Mammary epithelial cell (primary cell): ENCODE measurements at regions of chr7 and their contacts with region 1.

Region 1: GRCh38 chr7:66204822-66205740 is at the start of gene TPST1:
- DNase-seq: peak; percentile 82
- H3K4me3 ChIP-seq: peak within 1 kb of the TSS; percentile 86 to 99 (median 87)
- H3K27ac ChIP-seq: peak within 1 kb of the TSS; percentile 66
- H3K4me1 ChIP-seq: peaks cover 22% of the 10 kb centered on the region
- H3K27me3 ChIP-seq: no peaks in the 10 kb centered on the region
- CTCF ChIP-seq: peak in 1 of 2 donors; percentile 67
- total RNA-seq, gene TPST1: 36.8 to 90.7 TPM

Region 2: GRCh38 chr7:65974191-65974801 is 230.8 kb before region 1 on chr7:
- CTCF ChIA-PET with region 1: no interaction called
- dilution Hi-C with region 1: no loop called
- in situ Hi-C with region 1: no loop called
- intact Hi-C with region 1: no loop called
- DNase-seq: no peak
- H3K4me3 ChIP-seq: no peak overlapping the region
- H3K27ac ChIP-seq: no peak overlapping the region
- H3K4me1 ChIP-seq: no peaks in the 10 kb centered on the region
- H3K27me3 ChIP-seq: no peaks in the 10 kb centered on the region
- CTCF ChIP-seq: no peak

Region 3: DNA sequence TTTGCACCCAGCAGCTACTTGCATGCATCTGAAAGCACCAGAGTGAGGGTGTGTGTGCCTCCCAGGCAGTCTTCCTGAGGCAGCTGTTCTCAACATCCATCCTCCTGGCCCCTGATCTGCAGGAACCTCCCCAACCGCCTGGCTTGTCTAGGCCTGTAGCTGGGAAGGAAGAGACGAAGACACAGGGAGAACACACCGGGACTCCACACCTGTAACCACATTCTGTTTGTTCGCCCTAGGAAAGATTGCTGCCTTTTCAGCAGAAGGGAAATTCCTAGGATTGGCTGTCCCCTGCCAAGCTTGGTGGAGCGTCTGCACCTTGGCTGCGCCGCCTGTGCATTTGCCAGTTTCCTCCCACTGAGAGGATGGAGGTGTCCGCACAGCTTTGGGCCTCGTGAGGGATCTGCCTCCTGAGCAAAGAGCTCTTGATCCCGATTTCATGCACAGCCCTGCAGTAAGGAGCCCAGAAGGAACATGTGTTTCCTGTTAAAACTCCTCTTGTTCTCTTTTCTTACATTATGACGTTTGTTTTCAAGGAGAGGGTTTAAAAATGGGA is 154.7 kb after region 1 on chr7:
- CTCF ChIA-PET with region 1: no interaction called
- dilution Hi-C with region 1: no loop called
- in situ Hi-C with region 1: no loop called
- intact Hi-C with region 1: loop called (anchors 2 kb)
- DNase-seq: peak; percentile 99
- H3K4me3 ChIP-seq: peak overlapping the region in 1 of 3 experiments; percentile 25
- H3K27ac ChIP-seq: peak overlapping the region; percentile 85
- H3K4me1 ChIP-seq: peaks cover 46% of the 10 kb centered on the region
- H3K27me3 ChIP-seq: no peaks in the 10 kb centered on the region
- CTCF ChIP-seq: peak in 1 of 2 donors; percentile 4

Region 4: DNA sequence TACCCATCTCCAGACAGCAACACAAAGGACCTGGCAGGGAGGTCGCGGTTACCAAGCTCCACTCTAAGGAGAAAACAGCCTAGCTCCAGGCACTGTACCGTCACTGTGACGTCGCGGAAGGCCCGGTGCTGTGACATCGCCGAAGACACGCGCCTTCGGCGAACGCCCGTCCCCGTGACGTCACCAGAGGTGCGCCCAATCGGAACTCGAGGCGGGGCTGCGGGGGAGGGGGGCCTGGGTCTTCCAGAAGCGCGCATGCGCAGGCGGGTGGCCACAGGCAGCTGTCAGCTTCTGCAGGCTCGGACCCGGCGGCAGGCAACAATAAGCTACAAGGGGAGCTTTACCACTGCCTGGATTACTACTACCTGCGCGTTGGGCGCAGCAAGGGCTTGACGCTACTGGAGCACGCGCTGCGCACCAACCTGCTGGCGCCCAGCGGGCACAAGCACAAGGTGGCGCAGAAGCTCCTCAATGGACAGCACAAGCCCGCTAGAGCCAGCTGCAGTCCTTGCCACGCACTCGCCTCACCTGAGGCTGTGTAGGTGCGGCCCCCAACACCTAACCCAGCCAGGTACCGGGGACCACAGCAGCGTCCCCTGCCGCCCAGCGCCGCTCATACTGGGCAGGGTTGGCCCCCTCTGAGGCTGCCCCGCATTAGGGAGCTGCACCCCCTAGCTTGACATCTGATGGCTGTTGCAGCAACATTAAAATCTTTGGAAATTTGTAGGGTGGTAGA is 208.5 kb after region 1 on chr7:
- CTCF ChIA-PET with region 1: no interaction called
- dilution Hi-C with region 1: no loop called
- in situ Hi-C with region 1: no loop called
- intact Hi-C with region 1: loop called (anchors 10 kb)
- DNase-seq: peak; percentile 73
- H3K4me3 ChIP-seq: peak overlapping the region; percentile 26 to 57 (median 45)
- H3K27ac ChIP-seq: peak overlapping the region; percentile 12
- H3K4me1 ChIP-seq: peaks cover 4% of the 10 kb centered on the region
- H3K27me3 ChIP-seq: no peaks in the 10 kb centered on the region
- CTCF ChIP-seq: peak; percentile 42 to 63

Region 5: GRCh38 chr7:66493235-66494181 is 288.4 kb after region 1 on chr7:
- CTCF ChIA-PET with region 1: no interaction called
- dilution Hi-C with region 1: no loop called
- in situ Hi-C with region 1: loop called in 1 of 2 experiments (anchors 10 kb)
- intact Hi-C with region 1: loop called (anchors 2 kb)
- DNase-seq: peak; percentile 95
- H3K4me3 ChIP-seq: peak overlapping the region; percentile 66 to 85 (median 82)
- H3K27ac ChIP-seq: peak overlapping the region; percentile 88
- H3K4me1 ChIP-seq: peaks cover 14% of the 10 kb centered on the region
- H3K27me3 ChIP-seq: no peaks in the 10 kb centered on the region
- CTCF ChIP-seq: no peak